ENCODE measurements at regions of chr2 and their contacts with region 1.

Region 1: GRCh38 chr2:97911206-97911921 is 84.4 kb downstream of the TMEM131 start:
- DNase-seq: no peak
- H3K4me3 ChIP-seq: no peak overlapping the region
- H3K27ac ChIP-seq: no peak overlapping the region
- H3K4me1 ChIP-seq: no peaks in the 10 kb centered on the region
- H3K27me3 ChIP-seq: no peaks in the 10 kb centered on the region
- CTCF ChIP-seq: no peak

Region 2: DNA sequence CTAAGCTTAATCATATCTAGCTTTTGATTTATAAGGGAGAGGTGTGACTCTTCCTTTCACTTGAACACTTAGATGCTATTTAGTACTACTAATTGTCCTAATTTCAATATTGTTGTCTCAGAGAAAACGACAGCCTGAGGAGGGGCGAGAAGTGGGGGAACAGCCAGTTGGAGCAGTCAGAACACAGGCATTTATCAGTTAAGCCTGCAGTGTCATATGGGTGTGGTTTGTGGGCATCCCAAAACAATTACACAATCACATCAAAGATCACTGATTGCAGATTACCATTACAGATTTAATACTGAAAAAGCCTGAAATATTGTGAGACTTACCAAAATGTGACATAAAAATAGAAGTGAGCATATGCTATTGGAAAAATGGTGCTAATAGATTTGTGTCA is 68.5 kb after region 1 on chr2:
- CTCF ChIA-PET with region 1: no interaction called
- POLR2A ChIA-PET with region 1: interaction called, 11 read pairs
- intact Hi-C with region 1: no loop called
- DNase-seq: no peak
- H3K4me3 ChIP-seq: no peak overlapping the region
- H3K27ac ChIP-seq: no peak overlapping the region
- H3K4me1 ChIP-seq: no peaks in the 10 kb centered on the region
- H3K27me3 ChIP-seq: no peaks in the 10 kb centered on the region
- CTCF ChIP-seq: no peak

Region 3: DNA sequence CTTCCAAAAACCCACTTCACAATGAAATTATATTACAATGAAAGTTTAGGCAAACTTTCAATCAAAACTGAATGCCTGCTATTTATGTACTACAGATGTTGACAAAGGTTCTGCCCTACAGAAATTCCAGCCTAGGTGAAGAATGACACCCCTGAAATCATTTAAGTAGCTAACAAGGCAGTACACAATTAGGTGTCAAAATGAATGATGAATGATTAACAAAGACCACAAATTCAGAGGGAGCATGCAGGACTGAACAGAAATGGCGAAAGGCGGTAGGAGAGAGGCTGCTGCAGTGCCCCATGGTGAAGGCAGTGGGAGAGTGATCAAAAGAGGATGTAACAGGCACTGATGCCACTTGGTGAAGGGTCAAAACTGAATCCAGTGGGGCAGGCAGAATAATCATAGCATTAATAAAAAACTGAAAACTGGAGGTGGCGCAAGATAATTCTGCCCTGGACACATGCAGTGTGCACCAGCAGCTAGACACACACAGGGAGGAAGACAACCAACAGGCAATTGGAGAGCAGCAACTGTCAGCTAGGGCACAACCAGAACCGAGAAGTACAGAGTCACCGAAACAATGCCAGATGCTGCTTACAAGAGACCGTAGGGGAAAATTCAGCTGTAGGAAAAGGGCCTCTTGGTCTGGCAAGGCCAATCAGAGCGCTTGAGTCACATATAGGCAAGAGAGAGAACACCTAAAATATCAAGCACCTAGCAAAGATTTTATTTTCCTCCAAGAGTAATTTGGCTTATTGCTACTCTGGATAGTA is 79.9 kb after region 1 on chr2:
- CTCF ChIA-PET with region 1: no interaction called
- POLR2A ChIA-PET with region 1: no interaction called
- intact Hi-C with region 1: no loop called
- DNase-seq: no peak
- H3K4me3 ChIP-seq: no peak overlapping the region
- H3K27ac ChIP-seq: no peak overlapping the region
- H3K4me1 ChIP-seq: peaks cover 32% of the 10 kb centered on the region
- H3K27me3 ChIP-seq: no peaks in the 10 kb centered on the region
- CTCF ChIP-seq: no peak

Measured in PC-9 (cell line).